Panc1 (cell line): ENCODE measurements at regions of chr14 and their contacts with region 1.

Region 1: GRCh38 chr14:75293920-75294642 is 15.5 kb downstream of the FOS start:
- DNase-seq: no peak
- ATAC-seq: peak; percentile 95
- H3K4me3 ChIP-seq: peak overlapping the region; percentile 65 to 69
- H3K27ac ChIP-seq: no peak overlapping the region; the same call in 1 of the 2 replicates
- H3K4me1 ChIP-seq: no peaks in the 10 kb centered on the region
- H3K27me3 ChIP-seq: no peaks in the 10 kb centered on the region
- CTCF ChIP-seq: no peak

Region 2: GRCh38 chr14:75059642-75060041 is 234.4 kb before region 1 on chr14:
- CTCF ChIA-PET with region 1: no interaction called
- POLR2A ChIA-PET with region 1: no interaction called
- in situ Hi-C with region 1: no loop called
- intact Hi-C with region 1: no loop called
- DNase-seq: no peak
- ATAC-seq: no peak
- H3K4me3 ChIP-seq: no peak overlapping the region
- H3K27ac ChIP-seq: no peak overlapping the region
- H3K4me1 ChIP-seq: peaks cover 6% of the 10 kb centered on the region
- H3K27me3 ChIP-seq: no peaks in the 10 kb centered on the region
- CTCF ChIP-seq: no peak

Region 3: GRCh38 chr14:75138492-75138891 is 155.6 kb before region 1 on chr14:
- CTCF ChIA-PET with region 1: no interaction called
- POLR2A ChIA-PET with region 1: interaction called, 10 read pairs
- in situ Hi-C with region 1: no loop called
- intact Hi-C with region 1: no loop called
- DNase-seq: no peak
- ATAC-seq: no peak
- H3K4me3 ChIP-seq: no peak overlapping the region
- H3K27ac ChIP-seq: no peak overlapping the region
- H3K4me1 ChIP-seq: no peaks in the 10 kb centered on the region
- H3K27me3 ChIP-seq: no peaks in the 10 kb centered on the region
- CTCF ChIP-seq: no peak

Region 4: DNA sequence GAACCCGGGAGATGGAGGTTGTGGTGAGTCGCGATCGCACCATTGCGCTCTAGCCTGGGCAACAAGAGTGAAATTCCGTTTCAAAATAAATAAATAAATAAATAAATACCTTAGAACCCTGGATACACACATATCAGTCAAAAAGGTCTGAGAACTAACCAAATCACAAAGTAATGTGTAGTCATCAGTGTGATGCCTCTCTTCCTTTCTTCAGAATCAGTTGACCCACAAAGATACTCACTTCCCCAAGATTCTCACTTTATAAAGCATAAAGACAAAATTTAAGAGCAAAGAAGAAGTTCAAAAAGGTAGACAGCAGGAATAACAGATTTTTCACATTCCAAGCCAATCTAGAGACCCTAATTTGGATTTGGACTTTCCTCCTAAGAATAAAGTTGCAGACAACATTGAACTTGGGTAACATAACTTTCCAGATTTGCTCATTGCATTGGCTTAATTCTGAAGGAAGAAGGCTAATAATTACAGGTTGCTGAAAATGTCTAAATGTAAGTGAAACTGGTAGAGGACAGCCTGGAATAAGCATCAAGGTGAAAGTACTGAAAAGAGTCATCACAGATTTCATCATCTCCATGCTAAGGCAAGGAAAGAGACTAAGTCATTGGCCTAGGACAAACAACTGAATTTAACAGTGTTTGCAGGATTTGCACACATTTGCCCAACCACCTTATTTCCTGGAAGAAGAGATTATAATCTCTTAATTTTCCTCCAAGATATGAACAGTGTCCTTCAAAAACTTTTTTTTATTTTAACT is 135.1 kb before region 1 on chr14:
- CTCF ChIA-PET with region 1: no interaction called
- POLR2A ChIA-PET with region 1: no interaction called
- in situ Hi-C with region 1: no loop called
- intact Hi-C with region 1: no loop called
- DNase-seq: no peak
- ATAC-seq: no peak
- H3K4me3 ChIP-seq: no peak overlapping the region
- H3K27ac ChIP-seq: no peak overlapping the region
- H3K4me1 ChIP-seq: no peaks in the 10 kb centered on the region; the same call in 1 of the 2 replicates
- H3K27me3 ChIP-seq: no peaks in the 10 kb centered on the region
- CTCF ChIP-seq: no peak

Region 5: DNA sequence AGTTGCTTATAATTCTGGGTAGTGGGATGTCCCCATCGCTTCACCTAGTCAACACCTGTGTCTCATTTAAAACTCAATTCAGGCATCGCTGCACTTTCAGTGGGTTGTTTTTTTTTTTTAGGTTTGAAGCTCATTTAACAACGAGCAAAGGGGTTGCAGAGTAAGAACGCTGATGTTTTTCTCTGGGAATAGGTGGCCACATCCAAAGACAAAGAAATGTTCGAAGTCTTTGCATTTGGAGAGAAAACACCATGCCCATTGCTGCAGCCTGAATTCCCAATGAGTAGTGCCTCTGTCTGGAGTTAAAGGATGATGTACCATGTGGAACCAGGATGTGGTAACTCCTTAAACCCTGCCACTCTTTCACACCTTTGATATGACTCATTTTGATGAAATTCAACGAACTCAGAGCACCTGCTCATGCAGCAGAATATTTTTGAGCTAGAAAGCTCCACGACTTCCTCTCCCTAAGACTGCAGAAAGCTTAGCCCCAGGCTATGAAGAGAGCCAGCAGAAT is 193.1 kb after region 1 on chr14:
- CTCF ChIA-PET with region 1: interaction called, 12 read pairs
- POLR2A ChIA-PET with region 1: no interaction called
- in situ Hi-C with region 1: no loop called
- intact Hi-C with region 1: no loop called
- DNase-seq: no peak
- ATAC-seq: no peak
- H3K4me3 ChIP-seq: no peak overlapping the region
- H3K27ac ChIP-seq: no peak overlapping the region
- H3K4me1 ChIP-seq: no peaks in the 10 kb centered on the region
- H3K27me3 ChIP-seq: no peaks in the 10 kb centered on the region
- CTCF ChIP-seq: no peak

Region 6: GRCh38 chr14:75597149-75597548 is 303.1 kb after region 1 on chr14:
- CTCF ChIA-PET with region 1: no interaction called
- POLR2A ChIA-PET with region 1: no interaction called
- in situ Hi-C with region 1: no loop called
- intact Hi-C with region 1: no loop called
- DNase-seq: no peak
- ATAC-seq: no peak
- H3K4me3 ChIP-seq: no peak overlapping the region
- H3K27ac ChIP-seq: no peak overlapping the region
- H3K4me1 ChIP-seq: no peaks in the 10 kb centered on the region
- H3K27me3 ChIP-seq: no peaks in the 10 kb centered on the region
- CTCF ChIP-seq: no peak